Caco-2 (cell line): ENCODE measurements at regions of chr5 and their contacts with region 1.

Region 1: DNA sequence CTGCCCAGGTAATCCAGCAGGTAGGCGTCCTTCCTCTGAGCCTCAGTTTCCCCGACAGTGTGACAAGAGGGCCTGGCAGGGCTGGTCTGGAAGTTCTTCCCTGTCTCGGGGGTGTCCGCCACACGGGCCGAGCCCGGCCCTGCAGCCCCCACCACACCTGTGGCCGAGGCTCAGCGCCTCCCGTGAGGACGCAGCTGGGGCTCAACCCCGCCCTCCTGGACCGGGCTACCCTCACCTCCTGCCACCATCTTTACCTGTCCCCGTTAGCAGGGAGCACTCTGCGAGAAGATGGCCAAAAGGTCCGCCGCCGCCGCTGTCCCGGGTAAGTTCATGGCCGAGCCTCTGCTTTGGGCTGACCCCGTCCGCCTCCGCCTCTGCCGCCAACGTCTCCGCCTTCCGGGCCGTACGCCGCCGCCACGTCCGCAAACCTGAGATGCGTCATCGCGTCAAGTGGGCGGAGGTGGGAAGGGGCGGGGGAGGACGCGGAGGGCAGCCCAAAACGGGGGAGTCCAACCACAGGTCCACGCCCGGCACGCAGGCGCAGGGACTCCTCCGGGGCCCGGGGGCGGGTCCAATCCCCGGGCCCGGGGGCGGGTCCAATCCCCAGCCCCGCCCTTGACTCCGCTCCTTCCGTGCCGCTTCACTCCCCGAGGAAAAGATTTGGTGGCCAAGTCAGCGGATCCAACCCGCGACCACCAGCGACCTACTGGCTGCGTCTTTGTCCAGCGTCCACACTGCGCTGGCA is at the start of gene LYSMD3:
- DNase-seq: peak; percentile 97 to 98
- H3K4me3 ChIP-seq: peak within 1 kb of the TSS; percentile 51
- H3K4me3 Mint-ChIP-seq: peak within 1 kb of the TSS; percentile 96
- H3K27ac Mint-ChIP-seq: peak within 1 kb of the TSS; percentile 79
- H3K4me1 ChIP-seq: peaks cover 4% of the 10 kb centered on the region; the same call in 1 of the 2 replicates
- H3K4me1 Mint-ChIP-seq: peaks cover 26% of the 10 kb centered on the region
- H3K27me3 ChIP-seq: no peaks in the 10 kb centered on the region
- H3K27me3 Mint-ChIP-seq: no peaks in the 10 kb centered on the region
- CTCF ChIP-seq: no peak
- total RNA-seq, gene LYSMD3: 13.9 and 15.3 TPM in 2 replicates

Region 2: DNA sequence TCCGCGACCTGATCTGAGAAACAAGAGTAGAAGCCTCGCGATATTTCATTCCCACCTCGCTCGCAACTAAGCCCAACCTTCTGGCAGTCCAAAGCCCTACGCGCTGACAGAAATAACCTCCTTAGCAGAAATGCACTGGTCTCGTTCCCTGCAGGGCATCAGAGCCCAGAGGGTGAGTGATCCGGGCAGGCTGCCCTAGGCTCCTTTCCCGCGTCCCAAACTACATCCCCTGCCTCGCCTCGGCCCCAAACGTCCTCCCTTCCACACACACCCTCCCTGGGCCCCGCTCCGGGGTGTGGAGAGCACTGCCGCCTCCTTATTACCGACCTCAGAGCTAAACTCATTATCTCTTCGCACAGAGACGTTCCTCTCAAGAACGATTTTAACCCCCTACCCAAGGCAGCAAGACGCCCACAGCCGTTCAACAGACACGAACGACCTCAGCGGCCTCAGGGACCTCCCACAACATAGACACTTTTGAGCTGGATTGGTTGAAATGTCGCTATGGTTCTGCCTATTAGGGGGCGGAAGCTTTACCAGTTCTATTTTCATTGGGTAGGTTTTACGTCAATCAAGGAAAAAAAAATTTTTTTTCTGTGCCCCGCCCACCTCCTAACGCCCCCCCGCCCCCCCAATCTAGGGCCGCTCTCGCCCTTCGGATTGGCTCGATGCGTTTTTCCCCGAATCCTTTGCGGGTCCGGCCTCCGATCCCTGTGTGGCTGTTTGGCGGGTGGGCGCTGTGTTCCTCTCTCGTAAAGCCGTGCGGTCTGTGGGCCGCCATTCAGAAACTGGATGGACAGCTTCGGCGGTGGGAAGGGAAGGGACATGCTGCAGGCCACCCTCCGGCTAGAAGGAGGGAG is 119.8 kb before region 1 on chr5 and contains the start of gene CETN3:
- CTCF ChIA-PET with region 1: interaction called, 3 read pairs
- POLR2A ChIA-PET with region 1: no interaction called
- intact Hi-C with region 1: loop called (anchors 1 kb)
- DNase-seq: peak; percentile 96 to 97
- H3K4me3 ChIP-seq: peak within 1 kb of the TSS; percentile 82
- H3K4me3 Mint-ChIP-seq: no peak within 1 kb of the TSS
- H3K27ac Mint-ChIP-seq: no peak within 1 kb of the TSS
- H3K4me1 ChIP-seq: peaks cover 9% of the 10 kb centered on the region; the same call in 1 of the 2 replicates
- H3K4me1 Mint-ChIP-seq: peaks cover 14% of the 10 kb centered on the region
- H3K27me3 ChIP-seq: no peaks in the 10 kb centered on the region
- H3K27me3 Mint-ChIP-seq: no peaks in the 10 kb centered on the region
- CTCF ChIP-seq: peak in 1 of 2 experiments; percentile 22
- total RNA-seq, gene CETN3: 38.5 and 42.7 TPM in 2 replicates

Region 3: DNA sequence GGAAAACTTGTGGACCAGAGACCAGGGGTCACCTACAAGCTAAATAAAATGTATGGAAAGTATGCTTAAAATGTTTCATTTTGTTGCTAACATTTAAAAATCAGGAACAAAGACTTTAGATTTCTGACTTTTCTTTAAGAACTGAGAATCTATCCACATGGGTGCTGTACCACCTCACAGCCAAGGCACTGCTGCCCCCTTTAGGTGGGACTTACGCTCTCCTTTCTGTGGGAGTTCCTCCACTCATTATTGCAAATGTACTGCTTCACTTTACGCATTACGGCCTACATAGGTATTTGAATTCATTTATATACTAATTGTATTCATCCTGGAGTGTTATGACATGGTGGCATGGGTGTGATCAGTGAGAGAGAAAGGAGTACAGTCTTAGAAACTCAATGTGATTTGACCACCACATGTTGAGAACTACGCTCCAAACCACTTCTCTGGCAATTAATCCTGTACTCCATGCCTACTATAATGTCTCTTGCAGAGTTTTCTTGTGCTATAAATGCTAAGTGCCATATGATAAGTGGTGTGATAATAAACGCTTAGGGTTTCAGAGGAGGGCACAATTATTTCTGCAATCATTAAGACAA is 95.2 kb before region 1 on chr5:
- CTCF ChIA-PET with region 1: interaction called, 4 read pairs
- POLR2A ChIA-PET with region 1: no interaction called
- intact Hi-C with region 1: loop called (anchors 1 kb)
- DNase-seq: peak; percentile 55 to 77
- H3K4me3 ChIP-seq: no peak overlapping the region
- H3K4me3 Mint-ChIP-seq: no peak overlapping the region
- H3K27ac Mint-ChIP-seq: no peak overlapping the region
- H3K4me1 ChIP-seq: peaks cover 5% of the 10 kb centered on the region; the same call in 1 of the 2 replicates
- H3K4me1 Mint-ChIP-seq: peaks cover 6% of the 10 kb centered on the region
- H3K27me3 ChIP-seq: no peaks in the 10 kb centered on the region
- H3K27me3 Mint-ChIP-seq: peaks cover 10% of the 10 kb centered on the region
- CTCF ChIP-seq: peak; percentile 73 to 86

Region 4: GRCh38 chr5:90446961-90447360 is 82.4 kb before region 1 on chr5:
- CTCF ChIA-PET with region 1: no interaction called
- POLR2A ChIA-PET with region 1: no interaction called
- intact Hi-C with region 1: no loop called
- DNase-seq: no peak
- H3K4me3 ChIP-seq: no peak overlapping the region
- H3K4me3 Mint-ChIP-seq: no peak overlapping the region
- H3K27ac Mint-ChIP-seq: no peak overlapping the region
- H3K4me1 ChIP-seq: no peaks in the 10 kb centered on the region
- H3K4me1 Mint-ChIP-seq: no peaks in the 10 kb centered on the region
- H3K27me3 ChIP-seq: no peaks in the 10 kb centered on the region
- H3K27me3 Mint-ChIP-seq: no peaks in the 10 kb centered on the region
- CTCF ChIP-seq: no peak

Region 5: GRCh38 chr5:90606539-90606938 is 77.2 kb after region 1 on chr5:
- CTCF ChIA-PET with region 1: no interaction called
- POLR2A ChIA-PET with region 1: no interaction called
- intact Hi-C with region 1: loop called (anchors 1 kb)
- DNase-seq: peak in 1 of 2 experiments; percentile 5
- H3K4me3 ChIP-seq: no peak overlapping the region
- H3K4me3 Mint-ChIP-seq: no peak overlapping the region
- H3K27ac Mint-ChIP-seq: no peak overlapping the region
- H3K4me1 ChIP-seq: no peaks in the 10 kb centered on the region
- H3K4me1 Mint-ChIP-seq: peaks cover 6% of the 10 kb centered on the region
- H3K27me3 ChIP-seq: no peaks in the 10 kb centered on the region; the same call in 1 of the 2 replicates
- H3K27me3 Mint-ChIP-seq: peaks cover 9% of the 10 kb centered on the region
- CTCF ChIP-seq: peak; percentile 37 to 52

Region 6: GRCh38 chr5:90658620-90659019 is 129.3 kb after region 1 on chr5:
- CTCF ChIA-PET with region 1: no interaction called
- POLR2A ChIA-PET with region 1: no interaction called
- intact Hi-C with region 1: no loop called
- DNase-seq: no peak
- H3K4me3 ChIP-seq: no peak overlapping the region
- H3K4me3 Mint-ChIP-seq: no peak overlapping the region
- H3K27ac Mint-ChIP-seq: no peak overlapping the region
- H3K4me1 ChIP-seq: no peaks in the 10 kb centered on the region
- H3K4me1 Mint-ChIP-seq: no peaks in the 10 kb centered on the region
- H3K27me3 ChIP-seq: no peaks in the 10 kb centered on the region
- H3K27me3 Mint-ChIP-seq: no peaks in the 10 kb centered on the region
- CTCF ChIP-seq: no peak

Region 7: DNA sequence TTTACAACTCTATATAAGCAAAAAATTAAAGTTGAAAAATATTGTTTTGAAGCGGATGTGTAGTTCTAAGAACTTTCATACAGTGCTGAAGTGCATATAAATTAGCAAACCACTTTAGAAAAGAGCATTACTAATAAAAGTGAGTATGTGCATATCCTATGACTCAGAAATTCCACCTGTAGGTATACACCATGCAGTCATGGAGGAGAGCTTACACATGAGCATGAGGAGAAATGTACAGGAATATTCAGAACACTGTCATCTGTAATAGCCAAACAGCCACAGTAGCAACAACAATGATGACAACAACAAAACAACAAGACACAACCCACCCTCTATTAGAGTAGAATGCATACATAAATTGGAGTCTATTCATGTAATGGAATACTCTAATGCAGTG is 992.0 kb after region 1 on chr5:
- CTCF ChIA-PET with region 1: no interaction called
- POLR2A ChIA-PET with region 1: no interaction called
- intact Hi-C with region 1: no loop called
- DNase-seq: no peak
- H3K4me3 ChIP-seq: no peak overlapping the region
- H3K4me3 Mint-ChIP-seq: no peak overlapping the region
- H3K27ac Mint-ChIP-seq: no peak overlapping the region
- H3K4me1 ChIP-seq: no peaks in the 10 kb centered on the region
- H3K4me1 Mint-ChIP-seq: no peaks in the 10 kb centered on the region
- H3K27me3 ChIP-seq: no peaks in the 10 kb centered on the region
- H3K27me3 Mint-ChIP-seq: peaks cover 6% of the 10 kb centered on the region
- CTCF ChIP-seq: no peak